Adrenal gland (tissue), 19 donors: ENCODE measurements at regions of chr15 and their contacts with region 1.

Region 1: GRCh38 chr15:32844118-32844711 is 126.4 kb downstream of the GREM1 start:
- DNase-seq: no peak
- H3K4me3 ChIP-seq: no peak overlapping the region
- H3K27ac ChIP-seq: no peak overlapping the region
- H3K4me1 ChIP-seq: no peaks in the 10 kb centered on the region
- H3K27me3 ChIP-seq: no peaks in the 10 kb centered on the region
- CTCF ChIP-seq: peak; percentile 26 to 76 (median 59)
- POLR2A ChIP-seq: no peak

Region 2: GRCh38 chr15:32936283-32936918 is 92.2 kb after region 1 on chr15:
- intact Hi-C with region 1: loop called in 1 of 2 experiments (anchors 5 kb)
- DNase-seq: no peak
- H3K4me3 ChIP-seq: no peak overlapping the region
- H3K27ac ChIP-seq: no peak overlapping the region
- H3K4me1 ChIP-seq: no peaks in the 10 kb centered on the region
- H3K27me3 ChIP-seq: no peaks in the 10 kb centered on the region
- CTCF ChIP-seq: peak; percentile 52 to 72 (median 69)
- POLR2A ChIP-seq: no peak